Activated CD4-positive, alpha-beta T cell treated with anti-CD3 and anti-CD28 coated beads, Interleukin-2, amount 10 ng/mL, durations not matched to agents 24 days and 14 days (primary cell): ENCODE measurements at regions of chr18 and their contacts with region 1.

Region 1: GRCh38 chr18:61955644-61956043 is 62.8 kb upstream of the RNF152 start:
- DNase-seq: peak; percentile 39
- H3K4me3 Mint-ChIP-seq: no peak overlapping the region
- H3K27ac Mint-ChIP-seq: no peak overlapping the region
- H3K4me1 Mint-ChIP-seq: peaks cover 38% of the 10 kb centered on the region
- H3K27me3 Mint-ChIP-seq: peaks cover 43% of the 10 kb centered on the region

Region 2: DNA sequence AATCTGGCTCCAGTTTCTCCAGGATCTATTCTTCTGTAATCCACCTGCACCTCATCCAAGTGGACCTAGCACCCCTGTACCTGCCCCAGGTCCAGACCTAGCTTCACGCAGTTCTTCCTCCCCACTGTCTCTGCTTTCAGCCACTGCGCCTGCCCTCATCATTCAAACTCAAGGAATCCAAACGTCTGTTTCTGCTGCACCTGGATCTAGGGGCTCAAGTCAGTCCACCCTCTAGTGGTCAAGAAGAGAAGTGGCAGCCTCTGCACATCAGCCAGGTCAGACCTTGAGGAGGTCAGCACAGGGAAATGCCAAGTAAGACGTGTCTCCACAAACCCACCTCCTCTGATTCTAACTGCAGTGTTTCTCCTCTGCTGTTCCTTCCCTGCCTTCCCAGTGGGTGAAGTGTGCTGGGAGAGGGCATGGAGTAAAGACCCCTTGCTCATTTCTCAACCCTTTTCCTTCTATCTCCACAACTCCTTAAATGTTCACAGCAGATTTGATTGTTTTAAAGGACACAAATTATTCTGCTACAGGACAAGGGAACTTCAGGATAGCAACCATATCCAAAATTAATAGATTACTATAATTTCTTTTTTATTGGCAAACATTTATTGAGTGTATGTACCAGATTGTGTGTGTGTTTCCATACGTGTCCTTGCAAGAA is 54.2 kb before region 1 on chr18:
- intact Hi-C with region 1: loop called (anchors 2 kb)
- DNase-seq: peak; percentile 79
- H3K4me3 Mint-ChIP-seq: no peak overlapping the region
- H3K27ac Mint-ChIP-seq: no peak overlapping the region
- H3K4me1 Mint-ChIP-seq: peaks cover 2% of the 10 kb centered on the region
- H3K27me3 Mint-ChIP-seq: peaks cover 45% of the 10 kb centered on the region

Region 3: DNA sequence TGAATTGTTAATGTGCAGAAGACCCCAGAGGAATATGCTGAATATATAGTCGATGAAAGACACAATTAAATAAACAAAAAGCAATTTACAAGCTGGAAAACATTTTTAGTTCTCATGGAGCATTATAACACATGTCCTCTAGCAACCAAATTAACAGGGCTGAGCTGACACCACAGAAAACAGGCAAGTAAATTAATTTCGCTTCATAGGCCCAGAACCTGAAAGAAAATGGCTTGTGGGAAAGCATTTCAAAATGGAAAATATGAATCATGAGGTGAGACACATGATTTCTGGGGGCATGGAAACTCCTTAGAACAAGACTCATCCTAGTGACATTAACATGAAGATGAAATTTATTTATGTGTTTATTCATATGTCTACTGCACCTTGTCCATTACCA is 37.8 kb before region 1 on chr18:
- intact Hi-C with region 1: loop called (anchors 1 kb)
- DNase-seq: no peak
- H3K4me3 Mint-ChIP-seq: peak overlapping the region; percentile 21
- H3K27ac Mint-ChIP-seq: peak overlapping the region; percentile 70
- H3K4me1 Mint-ChIP-seq: peaks cover 23% of the 10 kb centered on the region
- H3K27me3 Mint-ChIP-seq: peaks cover 11% of the 10 kb centered on the region

Region 4: DNA sequence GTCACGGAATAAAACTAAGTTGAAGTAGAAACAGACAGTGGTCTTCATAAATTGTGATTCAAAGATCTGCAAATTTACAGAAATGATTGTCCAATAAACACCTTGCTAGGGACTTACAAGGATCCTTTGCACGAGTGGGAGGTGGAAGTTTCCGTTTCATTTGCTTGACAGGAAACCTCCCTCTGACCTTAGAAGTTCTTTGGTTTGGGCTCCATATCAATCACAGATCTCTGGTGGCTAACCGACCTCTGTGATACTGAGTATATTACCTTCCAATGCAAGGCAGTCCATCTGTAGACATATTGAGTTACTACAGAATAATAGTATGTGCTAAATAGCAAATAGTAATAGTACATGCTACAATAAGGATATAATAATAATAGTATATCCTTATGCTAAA is 29.1 kb before region 1 on chr18:
- intact Hi-C with region 1: loop called (anchors 1 kb)
- DNase-seq: peak; percentile 78
- H3K4me3 Mint-ChIP-seq: no peak overlapping the region
- H3K27ac Mint-ChIP-seq: peak overlapping the region; percentile 81
- H3K4me1 Mint-ChIP-seq: peaks cover 25% of the 10 kb centered on the region
- H3K27me3 Mint-ChIP-seq: peaks cover 4% of the 10 kb centered on the region

Region 5: GRCh38 chr18:61943175-61943964 is 12.3 kb before region 1 on chr18:
- intact Hi-C with region 1: loop called (anchors 1 kb)
- DNase-seq: no peak
- H3K4me3 Mint-ChIP-seq: no peak overlapping the region
- H3K27ac Mint-ChIP-seq: no peak overlapping the region
- H3K4me1 Mint-ChIP-seq: peaks cover 15% of the 10 kb centered on the region
- H3K27me3 Mint-ChIP-seq: peaks cover 26% of the 10 kb centered on the region

Region 6: GRCh38 chr18:61975526-61976326 is 20.1 kb after region 1 on chr18:
- intact Hi-C with region 1: loop called (anchors 1 kb)
- DNase-seq: peak; percentile 91
- H3K4me3 Mint-ChIP-seq: no peak overlapping the region
- H3K27ac Mint-ChIP-seq: peak overlapping the region; percentile 21
- H3K4me1 Mint-ChIP-seq: peaks cover 24% of the 10 kb centered on the region
- H3K27me3 Mint-ChIP-seq: no peaks in the 10 kb centered on the region